H1 (cell line): ENCODE measurements at regions of chr2 and their contacts with region 1.

Region 1: DNA sequence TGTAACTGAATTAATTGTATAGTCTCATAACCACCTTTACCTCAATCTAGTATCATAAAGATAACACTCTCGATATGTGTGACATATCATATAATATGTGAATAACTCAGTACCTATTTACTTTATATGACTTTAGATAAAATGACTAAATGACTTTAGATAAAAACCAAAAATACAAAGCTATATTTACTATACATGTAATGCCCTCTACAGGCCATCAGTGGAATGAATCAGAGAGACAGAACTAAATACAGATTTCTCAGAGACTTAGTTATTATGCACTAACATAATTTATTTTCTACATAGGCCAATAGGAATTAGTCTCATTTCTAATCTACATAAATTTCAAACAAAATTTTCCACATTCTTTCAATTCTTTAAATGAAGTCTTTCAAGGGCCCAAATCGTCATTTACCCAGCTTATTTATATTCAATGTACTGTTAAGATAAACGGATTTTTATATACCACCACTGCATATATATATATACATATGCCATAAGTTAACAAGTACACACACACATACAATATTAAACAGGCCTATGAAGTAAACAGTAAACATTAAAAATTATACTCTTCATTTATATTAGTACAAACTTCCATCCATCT is 219.9 kb downstream of the EXOC6B start:
- DNase-seq: no peak
- H3K4me3 ChIP-seq: no peak overlapping the region
- H3K27ac ChIP-seq: no peak overlapping the region
- H3K4me1 ChIP-seq: peaks cover 0 to 2% (median 0%) of the 10 kb centered on the region in 4 experiments; a peak in 1 of 7 replicates
- H3K27me3 ChIP-seq: no peaks in the 10 kb centered on the region
- CTCF ChIP-seq: peak in 1 of 3 experiments; percentile 47; a peak in 2 of 4 replicates
- EP300 ChIP-seq: no peak
- POLR2A ChIP-seq: no peak
- RAD21 ChIP-seq: peak in 1 of 2 experiments; percentile 18; a peak in 1 of 4 replicates

Region 2: GRCh38 chr2:72579591-72580180 is 26.3 kb before region 1 on chr2:
- CTCF ChIA-PET with region 1: no interaction called
- POLR2A ChIA-PET with region 1: no interaction called
- DNase-seq: no peak
- H3K4me3 ChIP-seq: no peak overlapping the region
- H3K27ac ChIP-seq: no peak overlapping the region
- H3K4me1 ChIP-seq: no peaks in the 10 kb centered on the region
- H3K27me3 ChIP-seq: no peaks in the 10 kb centered on the region
- CTCF ChIP-seq: peak in 2 of 3 experiments; percentile 39 to 48; a peak in 2 of 4 replicates
- EP300 ChIP-seq: no peak
- POLR2A ChIP-seq: no peak
- RAD21 ChIP-seq: peak; percentile 77 to 85

Region 3: DNA sequence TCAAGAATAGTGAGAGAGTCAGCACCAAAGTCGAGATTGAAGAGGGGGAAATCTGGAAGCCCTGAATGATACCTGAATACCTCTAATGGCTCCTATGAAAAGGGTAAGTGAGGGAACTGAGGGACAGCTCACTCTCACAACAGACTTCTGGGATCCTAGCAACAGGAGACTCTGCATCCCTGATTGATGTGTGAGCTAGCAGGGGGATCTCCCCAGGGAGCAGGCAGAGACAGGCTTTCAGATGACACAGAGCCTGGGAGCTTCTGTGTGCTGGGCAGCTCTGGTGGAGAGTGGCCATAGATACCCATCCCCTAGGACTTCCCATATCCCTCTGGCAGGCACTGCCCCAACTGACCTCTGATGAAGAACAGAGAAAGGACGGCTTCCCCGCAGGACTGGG is 13.7 kb after region 1 on chr2:
- CTCF ChIA-PET with region 1: interaction called, 12 read pairs
- POLR2A ChIA-PET with region 1: no interaction called
- DNase-seq: no peak
- H3K4me3 ChIP-seq: no peak overlapping the region
- H3K27ac ChIP-seq: no peak overlapping the region
- H3K4me1 ChIP-seq: peaks cover 0 to 5% (median 2%) of the 10 kb centered on the region in 4 experiments; a peak in 3 of 7 replicates
- H3K27me3 ChIP-seq: no peaks in the 10 kb centered on the region
- CTCF ChIP-seq: no peak
- EP300 ChIP-seq: no peak
- POLR2A ChIP-seq: no peak
- RAD21 ChIP-seq: no peak